ENCODE measurements at regions of chr7 and their contacts with region 1.

Region 1: DNA sequence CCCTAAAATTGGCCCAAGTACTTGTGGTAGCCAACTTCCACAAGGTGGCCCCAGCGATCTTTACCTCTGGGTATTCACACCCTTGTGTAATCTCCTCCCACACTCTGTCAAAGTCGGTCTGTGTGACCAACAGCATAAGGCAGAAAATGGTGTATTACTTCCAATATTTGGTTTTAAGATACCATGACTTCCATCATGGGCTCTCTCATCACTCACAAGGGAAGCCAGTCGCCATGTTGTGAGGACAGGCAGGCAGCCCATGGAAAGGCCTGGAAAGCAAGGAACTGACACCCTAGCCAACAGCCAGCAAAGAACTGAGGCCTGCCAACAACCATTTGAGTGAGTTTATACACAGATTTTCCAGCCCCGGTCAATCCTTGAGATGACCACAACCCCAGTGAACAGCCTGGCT is 91.0 kb upstream of the KMT2E start:
- DNase-seq: peak; percentile 92
- H3K4me3 ChIP-seq: no peak overlapping the region
- H3K27ac ChIP-seq: no peak overlapping the region
- H3K4me1 ChIP-seq: peaks cover 11% of the 10 kb centered on the region
- CTCF ChIP-seq: peak; percentile 97

Region 2: DNA sequence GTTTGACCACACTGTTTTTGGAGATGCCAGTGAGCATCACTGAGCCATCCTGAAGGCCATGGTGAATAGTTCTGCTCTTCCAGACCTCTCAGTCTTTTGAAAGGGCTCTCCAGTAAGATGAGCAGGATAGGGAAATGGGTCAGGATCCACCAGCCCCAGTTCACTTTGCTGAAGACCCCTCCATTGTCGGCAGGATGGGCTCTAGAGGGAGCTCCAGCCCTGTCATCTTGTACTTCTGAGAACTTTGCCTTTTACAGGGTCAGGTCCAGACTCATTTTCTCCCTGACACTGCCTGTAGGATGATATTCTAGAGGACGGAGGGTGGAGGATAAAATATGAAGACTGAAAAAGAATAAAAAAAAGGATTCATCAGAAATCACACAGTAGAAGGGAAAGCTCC is 581.5 kb before region 1 on chr7:
- CTCF ChIA-PET with region 1: no interaction called
- POLR2A ChIA-PET with region 1: no interaction called
- intact Hi-C with region 1: no loop called
- DNase-seq: peak; percentile 7
- H3K4me3 ChIP-seq: no peak overlapping the region
- H3K27ac ChIP-seq: no peak overlapping the region
- H3K4me1 ChIP-seq: no peaks in the 10 kb centered on the region
- CTCF ChIP-seq: peak; percentile 65

Region 3: DNA sequence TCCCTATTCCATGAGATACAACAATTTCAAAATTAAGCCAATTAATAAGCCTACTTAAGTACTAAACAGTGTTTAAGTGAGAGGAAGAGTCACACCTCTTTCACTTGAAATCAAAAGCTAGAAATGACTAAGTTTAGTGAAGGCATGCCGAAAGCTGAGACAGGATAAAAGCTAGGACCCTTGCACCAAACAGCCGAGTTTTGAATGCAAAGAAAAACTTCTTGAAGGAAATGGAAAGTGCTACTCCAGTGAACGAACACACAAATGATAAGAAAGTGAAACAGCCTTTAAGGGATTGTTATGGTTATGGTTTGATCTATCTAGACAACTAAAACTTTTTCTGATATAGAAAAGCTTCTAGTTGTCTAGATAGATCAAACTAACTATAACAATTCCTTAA is 44.4 kb before region 1 on chr7:
- CTCF ChIA-PET with region 1: interaction called, 10 read pairs
- POLR2A ChIA-PET with region 1: interaction called, 5 read pairs
- intact Hi-C with region 1: loop called (anchors 1 kb)
- DNase-seq: no peak
- H3K4me3 ChIP-seq: no peak overlapping the region
- H3K27ac ChIP-seq: no peak overlapping the region
- H3K4me1 ChIP-seq: no peaks in the 10 kb centered on the region
- CTCF ChIP-seq: no peak

Region 4: DNA sequence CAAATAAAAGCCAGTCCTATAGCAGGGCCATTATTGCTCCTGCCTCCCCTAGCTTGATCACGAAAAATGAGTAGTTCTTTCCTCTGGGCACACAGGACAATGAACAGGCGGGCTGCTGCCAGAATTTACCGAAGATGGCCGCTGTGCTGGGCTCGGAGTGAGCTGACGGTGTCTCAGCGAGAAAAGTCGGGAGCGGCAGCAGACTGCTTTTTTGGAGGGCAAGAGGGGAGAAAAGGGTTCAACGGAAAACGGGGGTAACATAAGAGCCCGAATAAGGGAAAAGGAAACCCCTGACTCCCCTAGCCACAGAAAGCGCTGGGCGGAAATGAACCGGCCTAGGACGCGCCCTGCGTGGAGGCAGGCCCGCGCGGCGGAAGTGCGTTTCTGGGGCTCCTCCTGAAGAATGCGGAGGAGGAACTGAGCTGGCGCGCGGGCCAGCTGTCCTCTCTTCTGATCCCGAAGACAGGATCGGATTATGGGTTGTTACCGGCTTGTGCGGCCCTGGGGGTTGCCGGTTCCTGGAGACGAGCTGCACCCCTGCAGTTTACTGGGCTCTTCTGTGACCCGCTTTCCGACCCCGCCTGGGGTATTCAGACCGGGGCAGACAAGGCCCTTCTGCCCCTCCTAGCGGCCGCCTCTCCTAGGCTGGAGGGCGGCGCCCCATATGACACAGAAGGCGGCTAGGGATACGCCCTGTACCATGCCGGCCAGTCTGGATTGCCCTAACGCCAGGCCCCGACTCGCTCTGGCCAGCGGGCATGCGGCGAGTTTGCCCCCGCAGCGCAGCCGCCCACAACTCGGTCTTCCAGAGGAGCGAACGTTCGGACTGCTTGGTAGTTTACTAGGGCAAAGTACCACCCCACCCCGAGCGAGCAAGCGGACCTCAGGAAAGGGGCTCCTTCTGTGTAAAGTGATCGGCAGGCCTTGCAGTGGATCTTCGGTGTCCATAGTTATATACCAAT is 60.8 kb after region 1 on chr7:
- CTCF ChIA-PET with region 1: interaction called, 8 read pairs
- POLR2A ChIA-PET with region 1: interaction called, 6 read pairs
- intact Hi-C with region 1: loop called (anchors 1 kb)
- DNase-seq: peak; percentile 84
- H3K4me3 ChIP-seq: peak overlapping the region; percentile 72
- H3K27ac ChIP-seq: peak overlapping the region; percentile 80
- H3K4me1 ChIP-seq: peaks cover 83% of the 10 kb centered on the region
- CTCF ChIP-seq: peak; percentile 65

Region 5: GRCh38 chr7:105118612-105119600 is 195.9 kb after region 1 on chr7:
- CTCF ChIA-PET with region 1: no interaction called
- POLR2A ChIA-PET with region 1: interaction called, 5 read pairs
- intact Hi-C with region 1: loop called (anchors 5 kb)
- DNase-seq: peak; percentile 57
- H3K4me3 ChIP-seq: no peak overlapping the region
- H3K27ac ChIP-seq: peak overlapping the region; percentile 16
- H3K4me1 ChIP-seq: peaks cover 21% of the 10 kb centered on the region
- CTCF ChIP-seq: no peak

Region 6: GRCh38 chr7:105487579-105488571 is 564.9 kb after region 1 on chr7:
- CTCF ChIA-PET with region 1: no interaction called
- POLR2A ChIA-PET with region 1: no interaction called
- intact Hi-C with region 1: loop called (anchors 1 kb)
- DNase-seq: peak; percentile 33
- H3K4me3 ChIP-seq: no peak overlapping the region
- H3K27ac ChIP-seq: no peak overlapping the region
- H3K4me1 ChIP-seq: no peaks in the 10 kb centered on the region
- CTCF ChIP-seq: peak; percentile 72

Measured in OCI-LY7 (cell line).